ENCODE measurements at regions of chr1 and their contacts with region 1.

Region 1: GRCh38 chr1:174874331-174875053 is 125.3 kb upstream of the CACYBP start:
- DNase-seq: no peak
- H3K4me3 ChIP-seq: no peak overlapping the region
- H3K27ac ChIP-seq: no peak overlapping the region
- H3K4me1 ChIP-seq: peaks cover 9% of the 10 kb centered on the region
- H3K27me3 ChIP-seq: no peaks in the 10 kb centered on the region
- CTCF ChIP-seq: no peak

Region 2: DNA sequence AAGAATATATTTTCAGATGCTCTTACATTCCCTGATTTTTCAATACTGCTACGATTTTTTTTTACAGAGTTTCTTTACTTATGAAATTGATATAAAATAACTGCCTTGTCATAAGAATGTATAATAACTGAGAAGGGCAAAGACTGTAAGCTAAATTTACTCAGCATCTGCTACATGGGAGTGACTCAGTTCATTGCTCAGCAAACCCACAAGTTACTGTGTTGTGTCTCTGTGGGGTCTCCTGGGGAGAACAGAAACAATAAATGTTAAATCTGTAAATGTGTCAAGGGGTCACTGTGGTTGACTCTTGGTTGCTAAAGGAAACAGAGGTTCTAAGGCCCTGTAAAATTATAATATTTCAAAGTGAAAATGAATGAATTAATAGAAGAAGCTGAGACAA is 85.1 kb before region 1 on chr1:
- CTCF ChIA-PET with region 1: no interaction called
- dilution Hi-C with region 1: loop called (anchors 5 kb)
- in situ Hi-C with region 1: no loop called
- intact Hi-C with region 1: no loop called
- DNase-seq: peak; percentile 71
- H3K4me3 ChIP-seq: peak overlapping the region in 1 of 3 experiments; percentile 32
- H3K27ac ChIP-seq: peak overlapping the region; percentile 89
- H3K4me1 ChIP-seq: peaks cover 25% of the 10 kb centered on the region
- H3K27me3 ChIP-seq: no peaks in the 10 kb centered on the region
- CTCF ChIP-seq: no peak

Region 3: DNA sequence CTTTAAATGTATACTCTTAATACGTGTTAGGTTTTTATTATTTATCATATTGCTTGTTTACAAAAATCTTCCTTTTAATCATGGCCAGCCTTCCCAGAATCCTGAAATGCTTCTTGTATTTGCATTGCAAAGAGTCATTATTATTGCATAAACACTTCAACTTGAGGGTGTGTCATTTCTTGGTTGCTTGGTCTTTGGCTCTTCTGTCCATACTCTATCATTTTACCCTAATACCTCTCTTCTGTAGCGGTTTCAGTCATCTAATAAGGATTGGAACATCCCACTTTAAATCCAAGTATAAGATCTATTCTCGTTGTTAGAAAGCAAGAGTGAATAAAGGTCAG is 75.4 kb before region 1 on chr1:
- CTCF ChIA-PET with region 1: no interaction called
- dilution Hi-C with region 1: no loop called
- in situ Hi-C with region 1: no loop called
- intact Hi-C with region 1: loop called (anchors 5 kb)
- DNase-seq: no peak
- H3K4me3 ChIP-seq: peak overlapping the region in 2 of 3 experiments; percentile 47 to 62
- H3K27ac ChIP-seq: peak overlapping the region; percentile 72
- H3K4me1 ChIP-seq: peaks cover 28% of the 10 kb centered on the region
- H3K27me3 ChIP-seq: no peaks in the 10 kb centered on the region
- CTCF ChIP-seq: no peak